HCT116 (cell line): ENCODE measurements at regions of chr16 and their contacts with region 1.

Region 1: GRCh38 chr16:4713663-4714501 is 20.2 kb downstream of the ANKS3 start:
- DNase-seq: no peak
- ATAC-seq: no peak
- H3K4me3 ChIP-seq: no peak overlapping the region
- H3K27ac ChIP-seq: no peak overlapping the region
- H3K4me1 ChIP-seq: no peaks in the 10 kb centered on the region
- H3K27me3 ChIP-seq: no peaks in the 10 kb centered on the region
- CTCF ChIP-seq: no peak
- POLR2A ChIP-seq: no peak
- RAD21 ChIP-seq: no peak

Region 2: GRCh38 chr16:4392382-4393239 is 321.3 kb before region 1 on chr16:
- CTCF ChIA-PET with region 1: no interaction called
- POLR2A ChIA-PET with region 1: no interaction called
- RAD21 ChIA-PET with region 1: no interaction called
- intact Hi-C with region 1: no loop called
- DNase-seq: no peak
- ATAC-seq: no peak
- H3K4me3 ChIP-seq: no peak overlapping the region
- H3K27ac ChIP-seq: no peak overlapping the region
- H3K4me1 ChIP-seq: peaks cover 7 to 14% of the 10 kb centered on the region in 2 experiments; a peak in 3 of 4 replicates
- H3K27me3 ChIP-seq: no peaks in the 10 kb centered on the region
- CTCF ChIP-seq: no peak
- POLR2A ChIP-seq: no peak
- RAD21 ChIP-seq: no peak

Region 3: GRCh38 chr16:5025171-5025632 is 311.3 kb after region 1 on chr16:
- CTCF ChIA-PET with region 1: no interaction called
- POLR2A ChIA-PET with region 1: no interaction called
- RAD21 ChIA-PET with region 1: no interaction called
- intact Hi-C with region 1: loop called (anchors 10 kb)
- DNase-seq: no peak
- ATAC-seq: peak; percentile 74
- H3K4me3 ChIP-seq: no peak overlapping the region
- H3K27ac ChIP-seq: no peak overlapping the region
- H3K4me1 ChIP-seq: no peaks in the 10 kb centered on the region
- H3K27me3 ChIP-seq: no peaks in the 10 kb centered on the region
- CTCF ChIP-seq: peak in 2 of 3 experiments; percentile 41; a peak in 2 of 6 replicates
- POLR2A ChIP-seq: no peak
- RAD21 ChIP-seq: peak; percentile 25; the same call in 1 of the 2 replicates